Activated CD8-positive, alpha-beta T cell treated with anti-CD3 and anti-CD28 coated beads for 36 hours (primary cell): ENCODE measurements at regions of chr11 and their contacts with region 1.

Region 1: DNA sequence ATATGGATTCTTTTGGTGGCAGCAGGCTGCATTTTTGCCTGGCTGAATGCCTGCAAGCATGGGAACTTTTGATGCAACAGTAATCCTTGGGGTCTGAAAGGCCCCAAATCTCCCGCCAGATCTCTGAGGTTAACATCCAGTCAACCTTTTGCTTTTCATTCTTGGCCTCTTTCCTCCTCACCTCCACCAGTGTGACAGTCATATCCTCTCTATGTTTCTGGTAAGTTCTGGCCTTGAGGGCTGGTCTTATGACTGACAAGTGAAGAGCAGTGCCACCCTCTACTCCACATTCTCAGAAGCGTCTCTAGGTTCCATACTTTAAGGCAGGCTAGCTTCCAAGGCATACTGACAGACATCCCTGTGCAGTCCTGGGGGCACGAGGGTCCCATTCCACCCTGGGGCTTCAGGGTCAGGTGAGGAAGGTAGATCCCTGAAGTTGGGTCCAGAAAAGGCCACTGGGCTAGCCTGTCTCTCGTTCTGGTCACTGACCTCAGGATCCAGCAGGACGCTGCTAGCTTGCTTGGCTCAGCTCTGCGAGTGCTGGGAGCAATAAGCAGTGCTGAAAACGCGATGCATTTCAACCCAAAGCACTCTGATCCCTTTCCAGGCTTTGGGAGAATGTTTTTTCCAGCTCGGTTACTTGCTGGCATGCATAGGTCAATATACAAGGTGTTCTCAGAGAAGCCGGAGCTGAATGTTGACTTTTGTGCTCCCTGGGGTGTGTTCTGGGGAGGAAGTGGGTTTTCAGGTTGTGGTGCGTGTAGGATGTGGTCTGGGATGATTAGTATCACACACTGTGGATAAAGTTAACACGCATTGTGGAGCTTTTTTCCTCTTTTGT is 75.2 kb downstream of the PTPRJ start:
- DNase-seq: peak; percentile 84
- ATAC-seq: peak; percentile 93
- H3K4me3 Mint-ChIP-seq: peak overlapping the region; percentile 51
- H3K27ac Mint-ChIP-seq: peak overlapping the region; percentile 87
- H3K4me1 Mint-ChIP-seq: peaks cover 70% of the 10 kb centered on the region
- H3K27me3 Mint-ChIP-seq: no peaks in the 10 kb centered on the region
- CTCF ChIP-seq: no peak

Region 2: DNA sequence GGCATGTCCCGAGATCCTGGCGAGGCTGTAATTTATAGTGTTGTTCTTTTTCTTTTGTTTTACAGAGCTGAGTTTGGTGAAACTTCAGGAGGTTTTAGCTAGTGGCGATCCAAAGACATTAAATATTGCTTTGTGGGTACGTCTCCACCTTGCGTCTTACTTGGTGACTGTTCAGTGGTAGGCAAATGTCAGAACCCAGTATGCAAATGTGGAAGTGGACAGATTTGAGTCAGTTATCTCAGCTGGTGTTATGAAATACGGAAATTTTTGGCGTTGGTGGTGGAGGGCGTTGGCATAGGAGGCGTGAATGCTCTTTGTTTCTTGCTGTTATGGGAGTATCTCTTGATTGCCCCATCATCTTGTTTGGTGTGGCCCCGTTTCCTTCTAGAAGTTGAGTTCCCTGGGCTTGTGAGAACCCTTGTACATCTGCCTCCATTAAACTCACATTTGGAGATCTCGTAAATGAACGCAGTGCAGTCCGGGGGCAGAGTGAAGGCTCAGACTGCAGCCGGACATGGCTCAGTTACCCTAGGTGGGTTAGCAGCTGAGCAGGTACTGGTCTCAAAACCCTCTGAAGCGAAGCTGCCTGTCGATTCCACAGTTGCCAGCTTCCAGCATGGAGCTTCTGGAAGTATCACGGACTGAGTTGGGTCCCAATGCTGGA is 35.3 kb before region 1 on chr11:
- CTCF ChIA-PET with region 1: interaction called, 4 read pairs
- POLR2A ChIA-PET with region 1: interaction called, 10 read pairs
- intact Hi-C with region 1: no loop called
- DNase-seq: peak; percentile 73
- ATAC-seq: peak; percentile 50
- H3K4me3 Mint-ChIP-seq: peak overlapping the region; percentile 4
- H3K27ac Mint-ChIP-seq: peak overlapping the region; percentile 73
- H3K4me1 Mint-ChIP-seq: peaks cover 57% of the 10 kb centered on the region
- H3K27me3 Mint-ChIP-seq: no peaks in the 10 kb centered on the region
- CTCF ChIP-seq: no peak